Heart left ventricle (tissue), 16 donors: ENCODE measurements at regions of chr21 and their contacts with region 1.

Region 1: DNA sequence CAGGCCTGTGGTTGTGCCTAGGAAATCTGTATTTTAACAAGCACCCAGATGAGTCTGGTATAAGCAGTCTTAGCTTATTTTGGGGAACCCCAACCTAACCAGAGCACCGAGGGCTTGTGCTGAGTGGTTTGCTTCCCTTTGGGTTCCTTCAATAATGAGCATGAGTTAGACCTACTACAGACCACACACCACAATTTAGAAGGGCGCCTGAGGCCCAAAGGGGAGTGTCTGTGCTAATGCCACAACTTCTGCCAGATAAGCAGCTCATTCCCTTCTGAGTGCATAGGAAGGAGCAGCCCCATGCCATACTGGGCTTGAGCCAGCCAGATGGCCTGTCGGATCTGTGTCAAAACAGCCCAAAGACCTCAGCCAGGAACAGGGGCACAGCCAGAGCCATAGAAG is 15.4 kb upstream of the LSS start:
- DNase-seq: peak in 1 of 5 donors; percentile 7
- ATAC-seq: no peak
- H3K4me3 ChIP-seq: no peak overlapping the region
- H3K27ac ChIP-seq: no peak overlapping the region
- H3K4me1 ChIP-seq: no peaks in the 10 kb centered on the region
- H3K27me3 ChIP-seq: no peaks in the 10 kb centered on the region
- CTCF ChIP-seq: no peak
- POLR2A ChIP-seq: no peak

Region 2: DNA sequence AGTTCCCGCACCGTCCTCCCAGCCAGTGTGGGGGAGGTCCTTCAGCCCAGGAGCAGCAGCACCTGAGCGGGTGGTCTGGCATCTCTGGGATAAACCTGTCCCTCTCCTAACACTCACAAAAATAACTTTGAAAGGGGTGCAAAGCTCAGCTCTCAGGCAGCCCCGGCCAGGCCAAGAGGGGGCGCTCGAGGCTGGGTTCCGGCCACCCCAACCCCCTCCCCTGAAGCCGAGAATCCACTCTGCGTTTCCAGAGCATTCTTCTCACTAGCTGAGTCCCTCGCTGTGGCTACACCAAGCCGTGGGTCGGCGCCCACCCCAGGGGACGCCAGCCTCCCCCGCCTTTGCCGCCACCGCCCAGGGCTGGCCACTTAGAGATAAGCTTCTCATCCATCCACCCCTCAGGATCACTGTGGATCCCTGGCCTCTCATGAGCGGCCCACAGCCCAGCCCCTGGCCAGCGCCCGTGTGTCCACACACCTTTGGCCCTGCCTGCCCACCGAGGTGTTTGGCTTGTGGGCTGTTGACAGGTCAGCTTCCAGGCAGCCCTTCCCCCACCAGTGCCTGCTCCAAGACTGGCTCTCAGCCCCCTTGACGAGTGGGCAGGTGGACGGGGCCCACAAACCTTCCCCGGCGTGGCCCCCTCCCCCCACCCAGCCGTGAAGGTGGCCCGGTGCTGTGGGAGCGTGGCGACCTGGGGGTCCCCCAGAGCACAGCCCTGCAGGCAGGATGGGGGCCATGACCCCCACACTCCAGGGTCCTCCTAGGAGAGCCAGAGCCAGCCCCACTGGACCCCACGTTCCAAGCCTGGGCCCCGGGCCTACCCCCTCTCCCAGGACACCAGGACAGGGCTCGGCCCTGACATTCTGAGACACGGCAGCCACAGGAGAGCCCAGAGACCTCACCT is 90.5 kb before region 1 on chr21:
- intact Hi-C with region 1: loop called in 1 of 10 experiments (anchors 10 kb)
- DNase-seq: peak in 4 of 5 donors; percentile 35 to 77 (median 56)
- ATAC-seq: peak in 3 of 4 donors; percentile 48 to 75 (median 72)
- H3K4me3 ChIP-seq: peak overlapping the region in 10 of 12 donors; percentile 20 to 47 (median 29)
- H3K27ac ChIP-seq: peak overlapping the region in 4 of 12 donors; percentile 18 to 58 (median 38)
- H3K4me1 ChIP-seq: peaks cover 3 to 15% (median 10%) of the 10 kb centered on the region in 12 donors
- H3K27me3 ChIP-seq: no peaks in the 10 kb centered on the region
- CTCF ChIP-seq: peak; percentile 56 to 84 (median 68)
- POLR2A ChIP-seq: no peak

Region 3: DNA sequence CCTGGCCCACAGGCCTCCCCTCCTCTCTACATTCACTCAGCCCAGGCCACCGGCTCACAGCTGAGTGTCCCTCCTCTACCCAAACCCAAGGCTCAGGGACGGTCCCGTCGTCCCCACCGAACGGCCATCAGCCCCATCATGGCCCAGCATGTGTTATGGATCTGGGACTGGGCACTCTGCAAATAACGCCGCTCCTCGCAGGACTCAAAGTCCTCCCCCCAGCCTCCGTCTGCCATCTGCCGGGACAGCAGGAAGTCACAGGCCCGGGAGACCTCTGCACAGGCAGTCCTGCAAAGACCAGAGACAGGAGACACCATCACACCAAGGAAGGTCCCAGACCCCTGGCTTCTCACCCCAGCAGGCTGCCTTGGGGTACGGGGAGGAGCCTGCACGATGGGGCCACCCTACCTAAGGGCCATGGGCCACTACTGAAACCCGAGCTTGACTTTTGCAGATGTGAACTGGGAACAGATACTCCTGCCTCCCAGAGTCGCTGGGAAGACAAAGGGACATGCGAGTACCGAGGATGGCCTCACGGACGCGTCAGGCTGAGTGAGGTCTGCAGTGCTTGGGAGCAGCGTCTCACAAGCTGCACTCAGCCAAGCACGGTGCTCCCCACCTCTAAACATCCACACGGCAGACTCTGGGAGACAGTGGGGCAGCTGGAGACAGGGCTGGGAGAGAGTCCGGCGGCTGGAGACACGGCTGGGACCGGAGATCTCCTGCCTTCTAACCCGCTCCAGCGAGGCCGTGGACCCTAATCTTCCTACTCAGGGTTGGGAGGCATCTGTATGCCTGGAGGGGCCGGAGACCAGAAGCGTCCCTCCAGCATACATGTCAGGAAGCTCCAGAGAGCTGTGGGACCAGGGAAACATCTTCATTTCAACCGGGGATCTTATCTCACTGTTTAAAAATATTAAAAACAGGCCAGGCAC is 49.3 kb before region 1 on chr21:
- intact Hi-C with region 1: no loop called
- DNase-seq: peak in 1 of 5 donors; percentile 39
- ATAC-seq: no peak
- H3K4me3 ChIP-seq: no peak overlapping the region
- H3K27ac ChIP-seq: no peak overlapping the region
- H3K4me1 ChIP-seq: peaks cover 0 to 18% (median 3%) of the 10 kb centered on the region in 12 donors
- H3K27me3 ChIP-seq: no peaks in the 10 kb centered on the region
- CTCF ChIP-seq: no peak
- POLR2A ChIP-seq: no peak